HepG2 (cell line): ENCODE measurements at regions of chr7 and their contacts with region 1.

Region 1: GRCh38 chr7:34675749-34676374 is 17.8 kb downstream of the NPSR1 start:
- DNase-seq: peak; percentile 27
- ATAC-seq: peak; percentile 87
- H3K4me3 ChIP-seq: no peak overlapping the region
- H3K27ac ChIP-seq: no peak overlapping the region
- H3K4me1 ChIP-seq: peaks cover 9% of the 10 kb centered on the region
- H3K27me3 ChIP-seq: no peaks in the 10 kb centered on the region
- CTCF ChIP-seq: peak; percentile 76
- EP300 ChIP-seq: no peak
- POLR2A ChIP-seq: no peak
- RAD21 ChIP-seq: peak; percentile 41; the same call in 1 of the 2 replicates

Region 2: DNA sequence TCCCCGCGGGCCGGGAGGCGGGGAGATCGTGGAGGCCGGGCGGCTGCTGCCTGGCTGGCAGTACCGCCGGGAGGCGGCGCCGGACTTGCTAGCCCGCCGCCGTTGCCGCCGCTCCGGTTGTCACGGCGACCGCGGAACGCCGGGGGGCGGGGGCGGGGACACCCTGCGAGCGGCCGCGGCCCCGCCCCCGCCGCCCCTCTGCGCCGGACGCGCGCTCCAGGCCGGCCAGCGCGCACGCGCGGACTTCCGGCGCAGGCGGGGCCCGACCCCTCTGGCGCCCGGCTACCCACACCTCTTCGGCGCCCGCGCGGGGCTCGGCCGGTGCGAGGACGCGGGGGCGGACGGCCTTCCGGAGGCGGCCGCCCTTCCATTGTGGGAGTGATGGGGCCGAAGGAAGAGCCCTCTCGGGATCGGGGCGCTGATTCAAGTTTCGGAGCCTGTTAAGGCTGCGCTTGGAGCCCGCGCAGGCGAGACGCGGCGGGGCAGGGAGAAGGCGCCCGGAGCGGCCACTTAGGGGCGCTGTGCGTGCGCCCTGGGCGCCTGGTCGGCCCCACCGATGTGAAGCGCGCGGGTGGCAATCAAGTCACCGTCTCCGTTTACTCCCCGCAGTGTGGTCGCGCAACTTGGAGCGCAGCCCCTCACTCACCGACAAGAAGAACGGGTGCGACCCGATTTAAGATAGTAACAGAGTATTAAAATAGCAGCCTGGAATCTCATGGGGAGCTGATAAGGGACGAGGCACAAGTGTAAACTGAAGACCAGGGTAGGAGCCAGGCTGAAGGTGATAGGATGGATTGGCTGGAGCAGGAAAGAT is 361.9 kb after region 1 on chr7:
- CTCF ChIA-PET with region 1: no interaction called
- POLR2A ChIA-PET with region 1: no interaction called
- in situ Hi-C with region 1: no loop called
- intact Hi-C with region 1: loop called (anchors 10 kb)
- DNase-seq: peak; percentile 79
- ATAC-seq: peak; percentile 83
- H3K4me3 ChIP-seq: peak overlapping the region; percentile 79 to 84 (median 82)
- H3K27ac ChIP-seq: peak overlapping the region; percentile 74
- H3K4me1 ChIP-seq: peaks cover 40% of the 10 kb centered on the region
- H3K27me3 ChIP-seq: peaks cover 0 to 4% of the 10 kb centered on the region in 2 experiments; a peak in 1 of 5 replicates
- CTCF ChIP-seq: peak; percentile 89
- EP300 ChIP-seq: no peak
- POLR2A ChIP-seq: peak; percentile 27 to 66; a peak in 3 of 4 replicates
- RAD21 ChIP-seq: peak; percentile 75